Posterior vena cava (tissue), 2 donors: ENCODE measurements at regions of chr9 and their contacts with region 1.

Region 1: GRCh38 chr9:127199001-127199791 is 65.4 kb upstream of the GARNL3 start:
- DNase-seq: peak; percentile 93

Region 2: DNA sequence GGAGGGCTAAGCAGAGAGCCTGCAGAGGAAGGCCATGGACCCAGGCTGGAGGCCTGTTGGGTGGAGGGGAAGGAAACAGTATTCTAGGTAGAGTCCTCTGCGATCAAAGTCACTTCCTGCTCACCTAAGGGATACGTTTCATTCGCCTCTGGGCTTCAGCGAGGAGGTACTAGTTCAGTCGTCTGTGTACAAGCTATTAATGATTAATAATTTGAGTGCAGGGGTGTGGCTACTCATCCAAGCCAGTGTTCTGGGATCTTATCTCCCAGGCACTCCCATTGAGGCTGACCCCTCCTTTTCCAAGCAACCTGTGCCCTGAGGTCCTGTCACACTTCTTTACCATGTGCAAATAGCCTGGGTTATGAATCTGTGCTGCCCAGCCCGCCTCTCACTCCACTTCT is 259.4 kb before region 1 on chr9:
- intact Hi-C with region 1: loop called (anchors 2 kb)
- DNase-seq: no peak

Region 3: DNA sequence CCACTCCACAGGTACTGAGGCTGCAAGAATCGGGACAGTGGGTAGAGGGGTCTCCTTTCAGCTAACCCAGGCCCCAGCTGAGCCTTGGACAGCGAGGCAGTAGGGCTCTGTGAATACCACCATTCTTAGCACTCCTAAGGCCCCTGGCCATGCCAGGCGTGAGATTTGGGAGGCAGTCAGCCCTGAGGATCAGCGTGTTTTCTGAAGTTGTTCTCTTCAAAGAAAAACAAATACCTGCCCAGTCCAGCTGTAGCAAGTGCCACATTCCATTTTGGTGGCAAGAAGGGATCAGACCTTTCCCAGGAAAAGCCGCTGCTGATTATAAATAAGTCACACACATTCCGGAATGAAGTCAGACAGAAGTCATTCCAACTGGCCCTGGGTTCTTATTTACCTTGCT is 236.9 kb before region 1 on chr9:
- intact Hi-C with region 1: loop called in 1 of 2 experiments (anchors 5 kb)
- DNase-seq: no peak

Region 4: DNA sequence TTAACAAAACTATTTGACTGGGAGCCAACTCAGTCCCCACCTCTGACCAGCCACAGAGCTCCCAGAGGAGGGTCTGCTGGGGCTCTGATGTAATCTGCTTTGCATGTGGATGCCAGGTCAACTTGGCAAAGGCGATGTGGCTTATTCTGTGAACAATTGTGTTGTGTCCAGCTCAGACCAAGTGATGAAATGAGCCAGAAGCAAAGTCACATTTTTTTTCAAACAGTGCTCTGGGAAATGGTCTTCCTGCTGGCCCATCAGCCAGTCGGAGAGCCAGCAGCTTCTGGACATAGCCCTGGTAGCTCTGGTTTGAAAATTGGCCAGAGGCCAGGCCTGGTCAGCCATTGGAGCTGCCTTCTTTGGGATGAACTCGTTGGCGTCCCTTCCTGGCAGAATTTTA is 163.2 kb before region 1 on chr9:
- intact Hi-C with region 1: loop called in 1 of 2 experiments (anchors 10 kb)
- DNase-seq: peak; percentile 89